IMR-90 (cell line): ENCODE measurements at regions of chr15 and their contacts with region 1.

Region 1: GRCh38 chr15:45118131-45118588 is 4.0 kb downstream of the DUOXA2 start:
- DNase-seq: peak; percentile 88
- ATAC-seq: peak; percentile 97
- H3K4me3 ChIP-seq: no peak overlapping the region
- H3K27ac ChIP-seq: no peak overlapping the region
- H3K4me1 ChIP-seq: peaks cover 3% of the 10 kb centered on the region
- H3K27me3 ChIP-seq: peaks cover 46% of the 10 kb centered on the region
- CTCF ChIP-seq: peak; percentile 100
- POLR2A ChIP-seq: no peak
- RAD21 ChIP-seq: peak; percentile 79

Region 2: GRCh38 chr15:45022871-45023658 is 95.1 kb before region 1 on chr15 and contains the start of gene SORD:
- CTCF ChIA-PET with region 1: interaction called, 5 read pairs
- POLR2A ChIA-PET with region 1: no interaction called
- dilution Hi-C with region 1: no loop called
- in situ Hi-C with region 1: no loop called
- intact Hi-C with region 1: loop called (anchors 1 kb)
- DNase-seq: peak; percentile 69
- ATAC-seq: peak; percentile 99
- H3K4me3 ChIP-seq: peak within 1 kb of the TSS; percentile 95
- H3K27ac ChIP-seq: peak within 1 kb of the TSS; percentile 81
- H3K4me1 ChIP-seq: peaks cover 4% of the 10 kb centered on the region; the same call in 1 of the 2 replicates
- H3K27me3 ChIP-seq: no peaks in the 10 kb centered on the region; the same call in 1 of the 2 replicates
- CTCF ChIP-seq: no peak
- POLR2A ChIP-seq: no peak
- RAD21 ChIP-seq: no peak
- total RNA-seq, gene SORD: 21.9 and 34.2 TPM in 2 replicates

Region 3: GRCh38 chr15:45064386-45064785 is 53.8 kb before region 1 on chr15:
- CTCF ChIA-PET with region 1: interaction called, 4 read pairs
- POLR2A ChIA-PET with region 1: no interaction called
- dilution Hi-C with region 1: no loop called
- in situ Hi-C with region 1: no loop called
- intact Hi-C with region 1: loop called (anchors 2 kb)
- DNase-seq: peak; percentile 45
- ATAC-seq: peak; percentile 67
- H3K4me3 ChIP-seq: no peak overlapping the region
- H3K27ac ChIP-seq: no peak overlapping the region
- H3K4me1 ChIP-seq: peaks cover 4% of the 10 kb centered on the region; the same call in 1 of the 2 replicates
- H3K27me3 ChIP-seq: no peaks in the 10 kb centered on the region
- CTCF ChIP-seq: no peak
- POLR2A ChIP-seq: no peak
- RAD21 ChIP-seq: no peak

Region 4: DNA sequence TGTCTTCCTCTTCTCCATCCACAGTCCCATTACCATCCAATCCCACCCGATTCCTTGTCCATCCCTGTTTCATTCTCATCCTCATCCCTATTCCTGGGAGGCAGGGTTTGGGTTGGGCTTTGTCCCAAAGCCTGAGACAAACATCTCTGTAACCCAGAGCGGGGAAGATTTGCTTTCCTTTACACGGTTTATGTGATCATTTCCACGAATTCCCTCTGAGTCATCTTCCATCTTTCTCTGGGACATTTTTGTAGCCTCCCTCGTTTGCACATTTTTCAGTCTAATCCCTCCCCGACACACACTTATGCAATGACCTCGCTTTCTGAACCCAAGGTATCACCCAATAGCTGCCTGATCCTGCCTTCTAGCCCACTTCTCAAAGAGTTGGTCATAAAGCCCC is 27.0 kb before region 1 on chr15:
- CTCF ChIA-PET with region 1: interaction called, 14 read pairs
- POLR2A ChIA-PET with region 1: no interaction called
- dilution Hi-C with region 1: no loop called
- in situ Hi-C with region 1: no loop called
- intact Hi-C with region 1: no loop called
- DNase-seq: peak; percentile 66
- ATAC-seq: peak; percentile 83
- H3K4me3 ChIP-seq: no peak overlapping the region
- H3K27ac ChIP-seq: peak overlapping the region; percentile 96
- H3K4me1 ChIP-seq: peaks cover 10% of the 10 kb centered on the region; the same call in 1 of the 2 replicates
- H3K27me3 ChIP-seq: peaks cover 36% of the 10 kb centered on the region
- CTCF ChIP-seq: no peak
- POLR2A ChIP-seq: no peak
- RAD21 ChIP-seq: no peak

Region 5: GRCh38 chr15:45139276-45139741 is 21.1 kb after region 1 on chr15:
- CTCF ChIA-PET with region 1: no interaction called
- POLR2A ChIA-PET with region 1: no interaction called
- dilution Hi-C with region 1: no loop called
- in situ Hi-C with region 1: no loop called
- intact Hi-C with region 1: no loop called
- DNase-seq: no peak
- ATAC-seq: no peak
- H3K4me3 ChIP-seq: no peak overlapping the region
- H3K27ac ChIP-seq: no peak overlapping the region
- H3K4me1 ChIP-seq: no peaks in the 10 kb centered on the region
- H3K27me3 ChIP-seq: peaks cover 60% of the 10 kb centered on the region
- CTCF ChIP-seq: no peak
- POLR2A ChIP-seq: no peak
- RAD21 ChIP-seq: no peak

Region 6: DNA sequence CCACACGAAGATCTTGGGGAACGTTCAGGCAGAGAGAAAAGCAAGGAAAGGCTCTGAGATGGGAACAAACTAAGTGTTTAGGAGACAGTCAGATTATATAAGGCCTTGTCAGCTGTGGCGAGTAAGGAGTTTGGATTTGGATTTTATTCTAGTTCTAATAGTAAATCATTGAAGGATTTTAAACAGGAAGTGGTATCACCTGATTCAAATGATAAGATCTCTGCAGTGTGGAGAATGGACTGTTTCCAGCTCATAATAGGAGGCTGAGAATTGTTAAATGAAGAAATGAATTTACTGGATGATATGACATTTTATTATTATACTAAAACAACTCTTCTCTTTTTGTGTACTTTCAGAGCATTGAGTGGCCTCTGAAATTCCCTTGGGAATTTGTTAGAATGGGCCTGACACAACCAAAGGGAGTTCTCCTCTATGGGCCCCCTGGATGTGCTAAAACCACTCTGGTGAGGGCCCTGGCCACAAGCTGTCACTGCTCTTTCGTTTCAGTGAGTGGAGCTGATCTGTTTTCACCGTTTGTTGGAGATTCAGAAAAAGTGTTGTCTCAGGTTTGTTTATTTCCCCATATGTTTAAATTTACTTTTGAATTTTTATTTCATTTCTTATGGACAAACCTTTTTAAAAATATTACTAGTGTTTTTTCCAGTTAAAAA is 296.2 kb after region 1 on chr15:
- CTCF ChIA-PET with region 1: no interaction called
- POLR2A ChIA-PET with region 1: no interaction called
- dilution Hi-C with region 1: no loop called
- in situ Hi-C with region 1: no loop called
- intact Hi-C with region 1: no loop called
- DNase-seq: no peak
- ATAC-seq: no peak
- H3K4me3 ChIP-seq: no peak overlapping the region
- H3K27ac ChIP-seq: no peak overlapping the region
- H3K4me1 ChIP-seq: no peaks in the 10 kb centered on the region
- H3K27me3 ChIP-seq: no peaks in the 10 kb centered on the region
- CTCF ChIP-seq: no peak
- POLR2A ChIP-seq: no peak
- RAD21 ChIP-seq: no peak